ENCODE measurements at regions of chr3 and their contacts with region 1.

Region 1: GRCh38 chr3:126389112-126389793 is 5.5 kb upstream of the CFAP100 start:
- DNase-seq: peak; percentile 99
- H3K4me3 ChIP-seq: peak overlapping the region; percentile 9 to 49 (median 46)
- H3K27ac ChIP-seq: peak overlapping the region; percentile 70 to 82 (median 80)
- H3K4me1 ChIP-seq: peaks cover 0 to 14% (median 9%) of the 10 kb centered on the region in 4 donors
- H3K27me3 ChIP-seq: no peaks in the 10 kb centered on the region
- CTCF ChIP-seq: peak; percentile 92 to 100 (median 99)
- EP300 ChIP-seq: peak in 3 of 4 donors; percentile 80 to 96 (median 80)
- POLR2A ChIP-seq: peak; percentile 36 to 43

Region 2: GRCh38 chr3:126134219-126134975 is 254.9 kb before region 1 on chr3:
- intact Hi-C with region 1: loop called (anchors 2 kb)
- DNase-seq: peak; percentile 87
- H3K4me3 ChIP-seq: no peak overlapping the region
- H3K27ac ChIP-seq: no peak overlapping the region
- H3K4me1 ChIP-seq: no peaks in the 10 kb centered on the region
- H3K27me3 ChIP-seq: no peaks in the 10 kb centered on the region
- CTCF ChIP-seq: peak; percentile 78 to 85 (median 82)
- EP300 ChIP-seq: no peak
- POLR2A ChIP-seq: no peak

Region 3: GRCh38 chr3:126245811-126246727 is 143.2 kb before region 1 on chr3:
- intact Hi-C with region 1: loop called (anchors 1 kb)
- DNase-seq: peak; percentile 82
- H3K4me3 ChIP-seq: no peak overlapping the region
- H3K27ac ChIP-seq: no peak overlapping the region
- H3K4me1 ChIP-seq: no peaks in the 10 kb centered on the region
- H3K27me3 ChIP-seq: no peaks in the 10 kb centered on the region
- CTCF ChIP-seq: peak in 1 of 4 experiments; percentile 57
- EP300 ChIP-seq: no peak
- POLR2A ChIP-seq: no peak

Region 4: DNA sequence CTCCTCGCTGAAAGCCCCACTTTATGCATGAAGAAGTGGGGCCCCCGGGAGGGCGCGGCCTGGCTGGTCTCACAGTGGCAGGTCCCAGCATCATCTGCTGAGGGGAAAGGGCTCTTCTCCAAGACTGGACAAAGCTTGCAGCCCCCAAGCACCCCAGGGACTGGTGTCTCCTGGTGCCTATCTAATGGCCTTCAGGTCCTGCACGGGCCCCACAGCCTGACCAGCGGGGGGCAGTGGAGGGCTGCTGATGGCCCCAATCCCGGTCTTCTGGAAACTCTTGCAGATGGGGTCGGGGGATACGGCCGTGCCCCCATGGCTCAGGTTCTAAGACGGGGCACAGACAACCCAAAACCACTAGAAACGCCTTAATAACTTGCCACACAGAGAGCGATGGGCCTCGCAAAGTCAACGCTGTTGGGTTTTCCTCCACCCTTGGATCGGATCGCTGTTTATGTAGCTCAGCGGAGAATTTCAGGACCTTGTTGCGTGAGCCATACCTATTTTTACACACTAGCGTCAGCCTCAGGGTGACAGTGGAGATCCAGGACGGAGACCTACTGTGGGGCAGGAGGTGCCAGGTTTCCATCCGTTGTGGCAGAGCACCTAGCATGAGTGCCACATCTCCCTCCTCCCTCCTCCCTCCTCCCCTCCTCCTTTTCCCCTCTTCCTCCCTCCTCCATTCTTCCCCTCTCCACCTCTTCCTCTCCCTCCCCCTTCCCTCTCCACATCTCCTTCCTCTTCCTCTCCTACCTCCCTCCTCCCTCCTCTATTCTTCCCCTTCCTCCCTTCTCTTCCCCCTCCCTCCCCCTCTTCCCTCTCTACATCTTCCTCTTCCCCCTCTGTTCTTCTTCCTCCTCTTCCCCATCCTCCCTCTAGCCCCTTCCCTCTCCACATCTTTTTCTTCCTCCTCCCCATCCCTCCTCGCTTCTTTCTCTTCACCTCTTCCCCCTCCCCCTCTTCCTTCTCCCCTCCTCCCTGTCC is 129.6 kb before region 1 on chr3:
- intact Hi-C with region 1: loop called (anchors 1 kb)
- DNase-seq: peak; percentile 85
- H3K4me3 ChIP-seq: peak overlapping the region in 3 of 4 donors; percentile 14 to 38 (median 28)
- H3K27ac ChIP-seq: peak overlapping the region in 3 of 4 donors; percentile 16 to 42 (median 28)
- H3K4me1 ChIP-seq: peaks cover 0 to 7% (median 2%) of the 10 kb centered on the region in 4 donors
- H3K27me3 ChIP-seq: no peaks in the 10 kb centered on the region
- CTCF ChIP-seq: peak; percentile 74 to 86 (median 78)
- EP300 ChIP-seq: no peak
- POLR2A ChIP-seq: no peak

Region 5: DNA sequence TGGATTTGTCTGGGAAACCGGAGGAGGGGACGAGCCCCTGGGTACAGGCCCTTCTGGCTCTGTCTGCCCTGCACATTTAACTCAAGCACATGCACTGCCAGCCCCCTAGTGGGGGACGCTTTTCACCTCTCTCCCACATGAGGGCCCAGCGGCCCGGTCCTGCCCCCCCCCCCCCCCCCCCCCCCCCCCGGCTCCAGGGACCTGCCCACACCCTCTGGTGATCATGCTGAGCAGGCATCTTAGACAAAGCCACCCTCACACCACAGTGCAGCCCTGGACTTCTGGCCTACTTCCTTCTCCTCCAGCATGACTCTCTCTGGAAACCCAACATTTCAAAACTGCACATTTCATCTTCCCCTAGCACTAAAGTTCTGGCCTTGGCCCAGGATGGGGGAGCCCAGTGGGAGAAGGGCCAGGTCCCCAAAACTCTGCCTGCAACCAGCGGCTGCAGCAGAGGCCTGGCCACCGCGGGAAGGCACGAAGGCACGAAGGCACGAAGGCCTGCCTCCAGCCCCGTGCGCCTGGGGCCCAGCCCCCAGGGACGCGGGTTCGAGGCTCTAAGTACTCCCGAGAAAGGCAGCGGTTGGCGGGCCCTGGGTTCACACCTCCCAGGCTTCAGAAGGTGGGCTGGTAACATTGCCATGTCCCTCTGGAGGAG is 46.1 kb before region 1 on chr3:
- intact Hi-C with region 1: no loop called
- DNase-seq: peak; percentile 66
- H3K4me3 ChIP-seq: no peak overlapping the region
- H3K27ac ChIP-seq: no peak overlapping the region
- H3K4me1 ChIP-seq: peaks cover 0 to 8% (median 8%) of the 10 kb centered on the region in 4 donors
- H3K27me3 ChIP-seq: no peaks in the 10 kb centered on the region
- CTCF ChIP-seq: no peak
- EP300 ChIP-seq: no peak
- POLR2A ChIP-seq: no peak

Region 6: DNA sequence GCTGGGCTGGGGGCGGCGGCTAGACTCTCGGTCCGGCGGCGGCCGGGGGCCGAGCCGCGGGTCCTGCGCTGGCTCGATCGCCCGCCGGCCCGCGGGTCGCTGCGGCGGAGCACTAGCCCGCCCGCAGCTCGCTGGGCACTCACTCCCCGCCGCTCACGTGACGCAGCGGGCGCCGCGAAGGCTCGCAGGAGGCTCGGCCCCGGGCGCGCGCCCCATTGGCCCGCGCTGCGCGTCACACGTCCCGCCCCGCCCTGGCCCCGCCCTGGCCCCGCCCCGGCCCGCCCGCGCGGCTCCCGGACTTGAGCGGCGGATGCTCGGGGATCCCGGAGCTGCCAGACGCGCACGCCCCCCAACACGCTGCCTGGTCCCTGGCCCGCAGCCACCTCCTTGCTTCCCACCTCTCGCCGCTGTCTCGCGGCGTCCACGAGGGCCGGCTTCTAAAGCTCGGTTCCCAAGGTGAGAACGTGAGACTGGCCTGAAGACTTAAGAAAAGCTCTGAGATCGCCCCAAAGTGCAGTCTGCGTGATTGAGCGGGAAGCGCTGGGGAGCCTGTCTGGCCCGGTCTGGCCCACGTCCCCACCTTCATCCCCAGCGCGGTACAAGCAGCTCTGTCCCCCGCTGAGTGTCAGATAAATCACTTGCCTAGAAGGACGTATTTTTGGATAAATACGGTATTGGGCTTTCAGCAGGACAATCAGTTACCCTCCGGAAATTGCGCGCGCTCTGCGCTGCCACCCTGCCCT is 31.8 kb before region 1 on chr3 and contains the start of gene KLF15:
- intact Hi-C with region 1: loop called (anchors 2 kb)
- DNase-seq: peak; percentile 96
- H3K4me3 ChIP-seq: peak within 1 kb of the TSS; percentile 61 to 97 (median 84)
- H3K27ac ChIP-seq: peak within 1 kb of the TSS; percentile 91 to 96 (median 94)
- H3K4me1 ChIP-seq: peaks cover 0 to 40% (median 35%) of the 10 kb centered on the region in 4 donors
- H3K27me3 ChIP-seq: no peaks in the 10 kb centered on the region
- CTCF ChIP-seq: no peak
- EP300 ChIP-seq: peak in 1 of 4 donors; percentile 21
- POLR2A ChIP-seq: no peak
- total RNA-seq, gene KLF15: 21.9 to 50.2 (median 35.2) TPM

Region 7: GRCh38 chr3:126475413-126476114 is 86.3 kb after region 1 on chr3 and contains the start of gene ZXDC:
- intact Hi-C with region 1: loop called (anchors 5 kb)
- DNase-seq: peak; percentile 97
- H3K4me3 ChIP-seq: peak within 1 kb of the TSS; percentile 46 to 84 (median 73)
- H3K27ac ChIP-seq: peak within 1 kb of the TSS; percentile 88 to 96 (median 94)
- H3K4me1 ChIP-seq: peaks cover 0 to 54% (median 47%) of the 10 kb centered on the region in 4 donors
- H3K27me3 ChIP-seq: no peaks in the 10 kb centered on the region
- CTCF ChIP-seq: no peak
- EP300 ChIP-seq: no peak
- POLR2A ChIP-seq: no peak
- total RNA-seq, gene ZXDC: 26.4 to 33.8 (median 28.9) TPM

Region 8: GRCh38 chr3:126634803-126635202 is 245.6 kb after region 1 on chr3:
- intact Hi-C with region 1: no loop called
- DNase-seq: no peak
- H3K4me3 ChIP-seq: no peak overlapping the region
- H3K27ac ChIP-seq: no peak overlapping the region
- H3K4me1 ChIP-seq: no peaks in the 10 kb centered on the region
- H3K27me3 ChIP-seq: no peaks in the 10 kb centered on the region
- CTCF ChIP-seq: no peak
- EP300 ChIP-seq: no peak
- POLR2A ChIP-seq: no peak